WTC11 (cell line): ENCODE measurements at regions of chr1 and their contacts with region 1.

Region 1: GRCh38 chr1:224188286-224188685 is 5.2 kb downstream of the DEGS1 start:
- DNase-seq: no peak
- ATAC-seq: no peak
- H3K4me3 Mint-ChIP-seq: no peak overlapping the region
- H3K27ac Mint-ChIP-seq: no peak overlapping the region
- H3K4me1 Mint-ChIP-seq: peaks cover 17% of the 10 kb centered on the region
- H3K27me3 Mint-ChIP-seq: no peaks in the 10 kb centered on the region
- CTCF ChIP-seq: no peak

Region 2: DNA sequence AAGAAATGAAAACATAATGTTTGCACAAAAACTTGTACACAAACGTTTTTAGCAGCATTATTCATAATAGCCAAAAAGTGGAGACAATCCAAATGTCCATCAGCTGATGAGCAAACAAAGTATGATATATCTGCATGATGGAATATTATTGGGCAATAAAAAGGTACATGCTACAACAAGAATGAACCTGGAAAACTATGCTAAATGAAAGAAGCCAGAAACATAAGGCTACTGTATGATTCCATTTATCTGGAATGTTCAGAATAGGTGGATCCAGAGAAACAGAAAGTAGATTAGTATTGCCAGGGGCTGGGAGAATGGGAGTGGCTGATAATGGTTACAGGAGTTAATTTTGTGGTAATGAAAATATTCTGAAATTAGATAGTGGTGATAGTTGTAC is 55.4 kb before region 1 on chr1:
- CTCF ChIA-PET with region 1: no interaction called
- POLR2A ChIA-PET with region 1: interaction called, 10 read pairs
- DNase-seq: no peak
- ATAC-seq: no peak
- H3K4me3 Mint-ChIP-seq: no peak overlapping the region
- H3K27ac Mint-ChIP-seq: no peak overlapping the region
- H3K4me1 Mint-ChIP-seq: no peaks in the 10 kb centered on the region
- H3K27me3 Mint-ChIP-seq: no peaks in the 10 kb centered on the region
- CTCF ChIP-seq: no peak